Activated naive CD4-positive, alpha-beta T cell treated with anti-CD3 and anti-CD28 coated beads for 36 hours (primary cell): ENCODE measurements at regions of chr14 and their contacts with region 1.

Region 1: GRCh38 chr14:21103710-21104447 is 3.0 kb downstream of the TMEM253 start:
- DNase-seq: peak; percentile 98
- H3K4me3 Mint-ChIP-seq: peak overlapping the region; percentile 87
- H3K27ac Mint-ChIP-seq: peak overlapping the region; percentile 84
- H3K4me1 Mint-ChIP-seq: peaks cover 29% of the 10 kb centered on the region
- H3K27me3 Mint-ChIP-seq: no peaks in the 10 kb centered on the region

Region 2: GRCh38 chr14:20855652-20856291 is 248.1 kb before region 1 on chr14:
- CTCF ChIA-PET with region 1: interaction called, 3 read pairs
- intact Hi-C with region 1: loop called (anchors 5 kb)
- DNase-seq: peak; percentile 62
- H3K4me3 Mint-ChIP-seq: no peak overlapping the region
- H3K27ac Mint-ChIP-seq: no peak overlapping the region
- H3K4me1 Mint-ChIP-seq: no peaks in the 10 kb centered on the region
- H3K27me3 Mint-ChIP-seq: no peaks in the 10 kb centered on the region

Region 3: GRCh38 chr14:21024585-21025370 is 79.1 kb before region 1 on chr14 and contains the start of gene NDRG2:
- CTCF ChIA-PET with region 1: interaction called, 260 read pairs
- intact Hi-C with region 1: loop called (anchors 1 kb)
- DNase-seq: peak; percentile 68
- H3K4me3 Mint-ChIP-seq: peak within 1 kb of the TSS; percentile 72
- H3K27ac Mint-ChIP-seq: no peak within 1 kb of the TSS
- H3K4me1 Mint-ChIP-seq: peaks cover 10% of the 10 kb centered on the region
- H3K27me3 Mint-ChIP-seq: no peaks in the 10 kb centered on the region
- total RNA-seq, gene NDRG2: 8.4 to 8.8 TPM

Region 4: GRCh38 chr14:21092273-21093011 is 11.4 kb before region 1 on chr14:
- CTCF ChIA-PET with region 1: interaction called, 168 read pairs
- intact Hi-C with region 1: loop called (anchors 1 kb)
- DNase-seq: peak; percentile 93
- H3K4me3 Mint-ChIP-seq: no peak overlapping the region
- H3K27ac Mint-ChIP-seq: no peak overlapping the region
- H3K4me1 Mint-ChIP-seq: peaks cover 13% of the 10 kb centered on the region
- H3K27me3 Mint-ChIP-seq: no peaks in the 10 kb centered on the region

Region 5: DNA sequence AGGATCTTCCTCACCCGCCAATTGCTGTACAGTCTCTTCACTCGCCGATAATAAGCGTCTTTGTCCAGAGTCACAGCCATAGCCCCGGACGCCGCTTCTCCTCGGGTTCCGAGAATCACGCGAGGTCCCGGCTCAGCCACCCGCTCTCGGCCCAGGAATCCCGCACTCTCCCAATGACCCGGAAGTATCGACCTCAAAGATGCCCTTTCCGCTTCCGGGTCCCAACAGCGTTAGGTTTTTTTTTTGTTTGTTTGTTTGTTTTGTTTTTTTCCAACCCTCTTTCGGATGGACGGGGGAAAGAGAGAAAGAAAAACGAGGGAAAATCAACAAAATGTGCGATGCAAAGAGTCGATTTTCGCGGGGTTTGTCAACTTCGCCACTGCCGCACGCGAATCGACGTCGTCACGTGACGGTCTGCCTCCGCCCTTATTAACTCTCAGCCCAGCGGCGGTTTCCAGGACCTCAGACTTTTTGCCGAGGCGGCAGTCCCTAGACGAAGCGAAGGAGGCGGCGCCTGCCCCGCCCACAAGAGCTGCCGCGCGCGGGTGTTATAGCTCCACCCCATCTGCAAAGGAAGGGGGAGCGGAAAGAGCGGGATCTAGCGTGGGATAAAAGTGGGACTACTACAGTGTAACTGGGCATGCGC is 280.1 kb after region 1 on chr14 and contains the start of gene SUPT16H:
- CTCF ChIA-PET with region 1: interaction called, 3 read pairs
- intact Hi-C with region 1: loop called (anchors 1 kb)
- DNase-seq: peak; percentile 97
- H3K4me3 Mint-ChIP-seq: peak within 1 kb of the TSS; percentile 98
- H3K27ac Mint-ChIP-seq: peak within 1 kb of the TSS; percentile 99
- H3K4me1 Mint-ChIP-seq: peaks cover 34% of the 10 kb centered on the region
- H3K27me3 Mint-ChIP-seq: no peaks in the 10 kb centered on the region
- total RNA-seq, gene SUPT16H: 164 to 165 TPM

Region 6: DNA sequence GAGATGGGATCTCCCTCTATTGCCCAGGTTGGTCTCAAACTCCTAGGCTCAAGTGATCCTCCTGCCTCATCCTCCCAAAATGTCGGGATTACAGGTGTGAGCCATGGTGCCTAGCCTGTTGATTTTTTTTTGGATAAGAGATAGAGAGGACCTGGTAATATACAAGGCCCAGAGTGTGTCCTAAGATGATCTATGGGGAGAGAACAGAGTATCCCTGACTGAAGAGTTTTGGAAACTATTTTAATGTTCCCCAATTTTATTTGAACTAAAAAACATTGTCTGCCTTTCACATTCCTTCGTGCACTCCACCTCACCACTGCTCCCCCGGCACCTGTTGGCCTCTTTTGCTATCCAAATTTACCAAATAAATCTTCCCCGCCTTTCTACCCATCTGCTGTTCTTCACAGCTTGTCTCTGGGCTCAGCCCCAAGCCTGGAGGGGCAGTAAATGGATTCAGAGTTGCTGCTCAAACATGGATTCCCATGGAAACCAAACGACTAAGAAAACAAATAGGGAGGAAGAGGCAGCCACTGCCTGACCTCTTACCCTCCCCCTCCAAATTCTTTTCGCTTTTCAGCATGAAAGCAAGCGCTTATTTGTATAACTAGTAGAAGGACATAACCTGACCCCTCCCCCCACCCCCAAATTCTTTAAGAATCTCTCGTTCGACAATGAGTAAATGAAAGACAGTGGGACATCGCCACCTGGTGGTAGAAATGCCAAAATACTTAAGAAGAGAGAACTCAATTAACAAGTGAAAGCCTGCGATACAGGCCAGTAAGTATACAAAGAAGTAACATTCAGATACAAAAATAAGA is 453.4 kb after region 1 on chr14:
- CTCF ChIA-PET with region 1: no interaction called
- intact Hi-C with region 1: loop called (anchors 2 kb)
- DNase-seq: peak; percentile 91
- H3K4me3 Mint-ChIP-seq: peak overlapping the region; percentile 27
- H3K27ac Mint-ChIP-seq: no peak overlapping the region
- H3K4me1 Mint-ChIP-seq: peaks cover 6% of the 10 kb centered on the region
- H3K27me3 Mint-ChIP-seq: no peaks in the 10 kb centered on the region